Calu3 (cell line): ENCODE measurements at regions of chr11 and their contacts with region 1.

Region 1: GRCh38 chr11:12149672-12150225 is 39.4 kb downstream of the MICAL2 start:
- DNase-seq: no peak
- H3K4me3 Mint-ChIP-seq: no peak overlapping the region
- H3K27ac Mint-ChIP-seq: peak overlapping the region; percentile 46
- H3K4me1 Mint-ChIP-seq: peaks cover 43% of the 10 kb centered on the region
- H3K27me3 Mint-ChIP-seq: no peaks in the 10 kb centered on the region
- CTCF ChIP-seq: no peak

Region 2: DNA sequence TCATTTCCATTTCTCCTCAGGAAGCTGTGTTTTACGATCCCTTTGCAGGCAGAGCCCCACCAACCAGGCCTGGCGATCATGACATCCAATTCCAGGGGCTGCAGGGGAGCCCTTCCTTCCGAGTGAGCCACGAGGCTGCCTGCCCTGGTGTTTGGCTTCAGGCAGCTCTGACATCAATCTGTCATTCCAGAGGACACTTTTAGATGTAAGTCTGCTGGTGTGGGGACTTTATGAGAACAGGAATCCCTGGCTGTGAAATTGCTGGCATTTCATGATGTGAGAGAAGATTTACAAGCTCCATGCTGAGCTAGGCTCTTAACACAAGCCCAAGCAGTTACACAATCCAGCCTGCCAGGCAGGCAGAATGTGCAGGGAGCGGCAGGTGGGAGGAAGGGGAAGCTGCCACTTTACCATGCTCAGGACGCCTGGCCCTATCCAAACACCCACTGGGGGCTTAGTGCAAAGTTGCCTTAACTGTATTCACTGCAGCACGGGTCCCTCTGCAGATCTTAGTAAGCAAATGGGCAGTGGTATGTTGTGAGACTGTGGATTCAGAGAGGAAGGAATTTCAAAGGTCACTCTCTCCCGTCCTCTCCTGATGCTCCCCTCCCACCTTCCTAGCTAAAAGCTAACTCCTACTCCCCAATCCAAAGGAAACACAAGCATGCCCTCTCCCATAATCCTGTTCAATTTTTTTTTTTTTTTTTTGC is 82.8 kb before region 1 on chr11:
- CTCF ChIA-PET with region 1: interaction called, 12 read pairs
- intact Hi-C with region 1: no loop called
- DNase-seq: peak; percentile 31
- H3K4me3 Mint-ChIP-seq: peak overlapping the region; percentile 31
- H3K27ac Mint-ChIP-seq: peak overlapping the region; percentile 85
- H3K4me1 Mint-ChIP-seq: peaks cover 51% of the 10 kb centered on the region
- H3K27me3 Mint-ChIP-seq: no peaks in the 10 kb centered on the region
- CTCF ChIP-seq: no peak